Aorta (tissue), 5 donors: ENCODE measurements at regions of chr11 and their contacts with region 1.

Region 1: DNA sequence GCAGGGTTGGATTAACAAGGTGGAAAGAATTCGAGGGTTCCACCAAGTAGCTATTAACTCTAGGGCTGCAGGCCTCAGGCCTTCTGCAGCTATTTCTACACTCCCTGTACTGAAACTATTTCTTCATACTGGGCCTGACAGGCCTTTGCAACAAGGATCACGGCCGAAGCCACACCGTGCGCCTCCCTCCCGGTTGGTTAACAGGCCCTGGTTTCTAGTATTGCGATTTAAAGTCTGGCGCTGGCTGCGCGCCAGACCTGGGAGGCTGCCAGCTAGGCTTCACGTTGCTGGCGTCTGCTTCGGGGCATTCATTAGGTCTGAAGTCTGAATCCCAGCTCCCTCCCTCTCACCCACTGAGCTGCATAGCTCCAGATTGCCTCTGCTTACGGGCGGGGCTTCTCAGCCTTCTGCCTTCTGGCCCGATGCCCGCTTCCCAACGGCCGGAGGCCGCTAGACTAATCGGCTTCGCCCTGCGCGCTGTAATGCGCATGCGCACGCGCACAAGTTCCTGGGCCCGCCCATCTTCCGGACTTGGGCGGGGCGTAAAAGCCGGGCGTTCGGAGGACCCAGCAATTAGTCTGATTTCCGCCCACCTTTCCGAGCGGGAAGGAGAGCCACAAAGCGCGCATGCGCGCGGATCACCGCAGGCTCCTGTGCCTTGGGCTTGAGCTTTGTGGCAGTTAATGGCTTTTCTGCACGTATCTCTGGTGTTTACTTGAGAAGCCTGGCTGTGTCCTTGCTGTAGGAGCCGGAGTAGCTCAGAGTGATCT is 1.6 kb downstream of the LDHA start:
- DNase-seq: peak; percentile 99
- ATAC-seq: peak; percentile 96
- H3K4me3 ChIP-seq: peak overlapping the region; percentile 71 to 81
- H3K27ac ChIP-seq: peak overlapping the region in 1 of 2 donors; percentile 75
- H3K4me1 ChIP-seq: no peaks in the 10 kb centered on the region
- H3K27me3 ChIP-seq: no peaks in the 10 kb centered on the region

Region 2: GRCh38 chr11:18036456-18036855 is 359.5 kb before region 1 on chr11:
- intact Hi-C with region 1: no loop called
- DNase-seq: no peak
- ATAC-seq: no peak
- H3K4me3 ChIP-seq: no peak overlapping the region
- H3K27ac ChIP-seq: no peak overlapping the region
- H3K4me1 ChIP-seq: no peaks in the 10 kb centered on the region
- H3K27me3 ChIP-seq: no peaks in the 10 kb centered on the region

Region 3: GRCh38 chr11:18230859-18231258 is 165.1 kb before region 1 on chr11:
- intact Hi-C with region 1: no loop called
- DNase-seq: no peak
- ATAC-seq: no peak
- H3K4me3 ChIP-seq: no peak overlapping the region
- H3K27ac ChIP-seq: no peak overlapping the region
- H3K4me1 ChIP-seq: no peaks in the 10 kb centered on the region
- H3K27me3 ChIP-seq: no peaks in the 10 kb centered on the region

Region 4: DNA sequence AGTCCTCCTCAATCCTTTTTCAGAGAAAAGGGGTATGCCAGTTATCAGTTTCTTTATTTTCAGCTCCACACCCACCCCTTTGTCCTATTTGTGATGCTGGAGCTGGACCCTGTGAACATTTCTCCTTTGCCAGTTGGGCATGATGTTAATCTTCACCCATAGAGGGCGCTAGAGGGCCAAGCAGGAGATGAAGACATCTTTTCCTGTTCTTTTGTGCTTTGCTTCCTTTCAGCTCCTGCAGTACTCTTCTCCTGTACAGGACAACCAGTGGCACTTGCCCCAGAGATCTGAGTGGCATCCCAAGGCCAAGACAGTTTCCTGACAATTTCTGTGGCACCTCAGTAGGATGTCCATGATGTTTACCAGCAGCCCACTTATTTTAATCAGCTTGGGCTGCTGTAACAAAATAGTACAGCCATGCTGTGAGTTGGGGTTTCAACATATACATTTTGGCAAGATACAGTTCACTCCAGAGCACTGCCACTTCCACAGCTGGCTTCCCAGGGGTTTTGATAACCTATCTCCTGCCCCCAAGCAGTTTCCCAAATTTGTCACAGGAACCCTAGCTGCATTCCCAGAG is 152.0 kb before region 1 on chr11:
- intact Hi-C with region 1: loop called in 1 of 2 experiments (anchors 10 kb)
- DNase-seq: peak in 1 of 2 donors; percentile 60
- ATAC-seq: no peak
- H3K4me3 ChIP-seq: no peak overlapping the region
- H3K27ac ChIP-seq: no peak overlapping the region
- H3K4me1 ChIP-seq: no peaks in the 10 kb centered on the region
- H3K27me3 ChIP-seq: no peaks in the 10 kb centered on the region

Region 5: DNA sequence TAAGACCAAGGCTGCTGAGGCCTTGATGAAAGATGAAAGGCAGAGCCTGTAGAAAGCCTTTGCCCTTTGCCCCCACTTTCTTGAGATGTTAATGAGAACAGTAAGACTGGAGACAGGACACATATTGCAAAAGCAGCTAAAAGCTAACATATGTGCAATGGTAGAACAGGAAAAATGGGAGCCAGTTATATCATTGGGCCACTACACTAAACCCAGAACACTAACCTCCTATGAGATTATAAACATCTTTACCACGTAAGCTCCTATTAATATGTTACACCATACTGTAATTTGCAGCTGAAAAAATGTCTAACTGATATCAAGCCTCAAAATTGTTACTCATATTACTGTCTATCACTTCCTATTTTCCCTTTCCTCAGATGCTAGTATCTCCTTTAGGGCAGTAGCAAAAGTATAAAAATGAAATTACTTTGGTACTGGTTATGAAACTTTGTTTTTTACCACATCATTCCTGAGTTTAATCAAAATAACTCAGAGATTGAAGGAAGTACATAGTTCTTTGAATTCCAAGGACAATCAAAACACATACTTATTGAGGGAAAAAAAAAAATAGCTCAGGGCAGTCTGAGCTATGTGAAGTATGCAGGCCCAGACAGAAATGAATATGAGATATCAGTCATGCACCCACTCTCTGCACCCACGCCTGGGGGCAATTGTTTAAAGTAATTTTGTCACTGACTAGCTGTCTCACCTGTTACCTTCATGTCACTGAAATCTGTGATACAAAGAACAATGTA is 83.1 kb before region 1 on chr11:
- intact Hi-C with region 1: loop called in 1 of 2 experiments (anchors 2 kb)
- DNase-seq: no peak
- ATAC-seq: no peak
- H3K4me3 ChIP-seq: no peak overlapping the region
- H3K27ac ChIP-seq: peak overlapping the region; percentile 98
- H3K4me1 ChIP-seq: peaks cover 6% of the 10 kb centered on the region in 2 donors
- H3K27me3 ChIP-seq: no peaks in the 10 kb centered on the region

Region 6: GRCh38 chr11:18321980-18322711 is 73.8 kb before region 1 on chr11 and contains the starts of genes GTF2H1 and HPS5:
- intact Hi-C with region 1: loop called (anchors 1 to 5 kb)
- DNase-seq: peak; percentile 98
- ATAC-seq: peak; percentile 100
- H3K4me3 ChIP-seq: peak within 1 kb of the TSS; percentile 64 to 86
- H3K27ac ChIP-seq: peak within 1 kb of the TSS; percentile 63 to 83
- H3K4me1 ChIP-seq: peaks cover 2 to 19% of the 10 kb centered on the region in 2 donors
- H3K27me3 ChIP-seq: no peaks in the 10 kb centered on the region
- total RNA-seq, gene GTF2H1: 39.3 to 53.3 TPM
- total RNA-seq, gene HPS5: 22.6 to 25.5 TPM

Region 7: DNA sequence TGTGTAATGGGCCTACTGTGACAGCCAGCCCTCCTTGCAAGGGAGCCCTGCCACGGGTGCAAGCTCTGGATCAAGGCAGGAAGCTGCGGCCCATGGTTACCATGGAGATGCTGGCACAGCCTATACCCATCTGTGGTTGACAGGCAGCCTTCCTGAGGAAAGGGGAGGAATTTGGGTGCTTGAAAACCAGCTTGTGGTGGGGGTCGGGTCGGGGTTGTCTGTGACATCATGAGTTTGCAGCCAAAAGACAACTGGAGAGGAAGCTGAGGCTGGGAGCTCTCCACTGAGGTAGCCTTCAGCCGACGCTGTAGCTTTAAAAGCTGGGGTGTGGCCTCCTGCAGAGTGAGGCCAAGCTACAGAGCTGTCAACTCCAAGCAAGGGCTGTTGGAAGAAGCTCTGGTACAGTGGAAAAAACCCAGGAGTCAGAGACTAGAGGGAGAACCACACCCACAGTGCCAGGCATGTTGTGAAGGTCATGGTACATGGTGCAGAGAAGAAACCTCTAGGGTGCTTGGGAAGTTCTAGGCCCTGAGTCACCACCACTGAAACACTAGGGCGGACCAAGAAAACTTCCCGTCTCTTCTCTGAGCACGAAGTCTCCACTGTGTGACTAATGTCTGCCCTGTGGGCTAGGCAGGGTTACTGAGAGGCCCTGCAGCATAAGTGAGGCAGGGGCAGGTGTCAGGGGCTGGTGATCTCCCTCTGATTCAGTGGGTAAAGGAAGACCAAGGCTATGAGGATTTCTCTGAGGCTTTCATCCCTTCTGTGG is 12.3 kb before region 1 on chr11:
- intact Hi-C with region 1: loop called in 1 of 2 experiments (anchors 1 kb)
- DNase-seq: peak; percentile 88 to 92
- ATAC-seq: peak; percentile 96
- H3K4me3 ChIP-seq: no peak overlapping the region
- H3K27ac ChIP-seq: peak overlapping the region; percentile 92 to 100
- H3K4me1 ChIP-seq: no peaks in the 10 kb centered on the region
- H3K27me3 ChIP-seq: no peaks in the 10 kb centered on the region

Region 8: GRCh38 chr11:18526521-18527296 is 130.8 kb after region 1 on chr11 and contains the start of gene TSG101:
- intact Hi-C with region 1: loop called in 1 of 2 experiments (anchors 5 kb)
- DNase-seq: peak; percentile 97 to 99
- ATAC-seq: peak; percentile 99
- H3K4me3 ChIP-seq: peak within 1 kb of the TSS; percentile 88 to 94
- H3K27ac ChIP-seq: peak within 1 kb of the TSS; percentile 45 to 87
- H3K4me1 ChIP-seq: no peaks in the 10 kb centered on the region
- H3K27me3 ChIP-seq: no peaks in the 10 kb centered on the region
- total RNA-seq, gene TSG101: 37.2 to 40.3 TPM